ENCODE measurements at regions of chr11 and their contacts with region 1.

Region 1: GRCh38 chr11:94800414-94800813 is 32.3 kb downstream of the AMOTL1 start:
- DNase-seq: no peak

Region 2: GRCh38 chr11:94834911-94835593 is 34.6 kb after region 1 on chr11:
- intact Hi-C with region 1: loop called (anchors 5 kb)
- DNase-seq: no peak